Sigmoid colon (tissue), 7 donors: ENCODE measurements at regions of chr6 and their contacts with region 1.

Region 1: DNA sequence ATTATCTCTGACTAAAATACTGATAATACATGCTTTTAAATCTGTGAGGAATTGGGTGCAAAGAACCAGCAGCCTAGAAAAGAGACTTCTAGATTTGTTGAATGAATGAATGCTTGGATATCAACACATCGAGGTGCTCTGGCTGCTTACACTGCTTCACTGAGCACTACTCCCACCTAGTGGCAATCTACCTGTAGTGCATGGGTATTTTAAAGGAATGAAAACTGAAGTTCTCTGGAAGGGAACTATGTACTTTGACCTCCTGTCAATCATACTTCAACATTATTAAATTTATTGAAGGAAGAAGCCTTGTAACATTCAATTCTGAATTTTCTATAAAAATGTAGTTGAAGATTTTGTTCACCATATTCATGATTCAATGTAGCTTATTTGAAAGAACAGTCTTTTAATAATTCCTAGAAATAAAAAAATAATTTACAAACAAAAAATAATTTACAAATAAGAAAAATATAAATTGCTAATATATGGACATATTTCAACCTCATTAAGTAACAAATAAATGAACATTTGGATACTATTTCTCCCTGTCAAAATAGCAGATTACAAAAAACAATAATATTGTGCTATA is 111.2 kb upstream of the MMS22L start:
- DNase-seq: no peak
- H3K4me3 ChIP-seq: no peak overlapping the region
- H3K27ac ChIP-seq: no peak overlapping the region
- H3K4me1 ChIP-seq: no peaks in the 10 kb centered on the region
- H3K27me3 ChIP-seq: no peaks in the 10 kb centered on the region
- CTCF ChIP-seq: peak; percentile 45 to 83 (median 72)
- EP300 ChIP-seq: no peak
- POLR2A ChIP-seq: no peak

Region 2: GRCh38 chr6:97073903-97074302 is 320.4 kb before region 1 on chr6:
- intact Hi-C with region 1: loop called (anchors 5 kb)
- DNase-seq: no peak
- H3K4me3 ChIP-seq: no peak overlapping the region
- H3K27ac ChIP-seq: no peak overlapping the region
- H3K4me1 ChIP-seq: no peaks in the 10 kb centered on the region
- H3K27me3 ChIP-seq: no peaks in the 10 kb centered on the region
- CTCF ChIP-seq: no peak
- EP300 ChIP-seq: no peak
- POLR2A ChIP-seq: no peak

Region 3: GRCh38 chr6:97136335-97136991 is 257.8 kb before region 1 on chr6:
- intact Hi-C with region 1: no loop called
- DNase-seq: no peak
- H3K4me3 ChIP-seq: no peak overlapping the region
- H3K27ac ChIP-seq: no peak overlapping the region
- H3K4me1 ChIP-seq: peaks cover 0 to 2% (median 0%) of the 10 kb centered on the region in 4 donors
- H3K27me3 ChIP-seq: no peaks in the 10 kb centered on the region
- CTCF ChIP-seq: no peak
- EP300 ChIP-seq: no peak
- POLR2A ChIP-seq: no peak

Region 4: GRCh38 chr6:97186416-97186999 is 207.7 kb before region 1 on chr6:
- intact Hi-C with region 1: loop called (anchors 1 kb)
- DNase-seq: no peak
- H3K4me3 ChIP-seq: no peak overlapping the region
- H3K27ac ChIP-seq: no peak overlapping the region
- H3K4me1 ChIP-seq: no peaks in the 10 kb centered on the region
- H3K27me3 ChIP-seq: no peaks in the 10 kb centered on the region
- CTCF ChIP-seq: peak; percentile 15 to 75 (median 50)
- EP300 ChIP-seq: no peak
- POLR2A ChIP-seq: no peak

Region 5: GRCh38 chr6:97262676-97263075 is 131.6 kb before region 1 on chr6:
- intact Hi-C with region 1: no loop called
- DNase-seq: no peak
- H3K4me3 ChIP-seq: no peak overlapping the region
- H3K27ac ChIP-seq: no peak overlapping the region
- H3K4me1 ChIP-seq: no peaks in the 10 kb centered on the region
- H3K27me3 ChIP-seq: no peaks in the 10 kb centered on the region
- CTCF ChIP-seq: no peak
- EP300 ChIP-seq: no peak
- POLR2A ChIP-seq: no peak

Region 6: GRCh38 chr6:97440590-97441176 is 46.4 kb after region 1 on chr6:
- intact Hi-C with region 1: no loop called
- DNase-seq: no peak
- H3K4me3 ChIP-seq: no peak overlapping the region
- H3K27ac ChIP-seq: no peak overlapping the region
- H3K4me1 ChIP-seq: peaks cover 0 to 4% (median 2%) of the 10 kb centered on the region in 4 donors
- H3K27me3 ChIP-seq: no peaks in the 10 kb centered on the region
- CTCF ChIP-seq: peak in 2 of 4 experiments; percentile 18 to 38
- EP300 ChIP-seq: no peak
- POLR2A ChIP-seq: no peak